Activated CD4-positive, alpha-beta memory T cell treated with anti-CD3 and anti-CD28 coated beads for 36 hours (primary cell): ENCODE measurements at regions of chr3 and their contacts with region 1.

Region 1: GRCh38 chr3:88732186-88732585 is 375.2 kb upstream of the EPHA3 start:
- DNase-seq: no peak
- H3K4me3 Mint-ChIP-seq: no peak overlapping the region
- H3K27ac Mint-ChIP-seq: no peak overlapping the region
- H3K4me1 Mint-ChIP-seq: no peaks in the 10 kb centered on the region
- H3K27me3 Mint-ChIP-seq: no peaks in the 10 kb centered on the region

Region 2: GRCh38 chr3:88707837-88708236 is 24.3 kb before region 1 on chr3:
- CTCF ChIA-PET with region 1: no interaction called
- POLR2A ChIA-PET with region 1: no interaction called
- intact Hi-C with region 1: loop called (anchors 1 kb)
- DNase-seq: no peak
- H3K4me3 Mint-ChIP-seq: no peak overlapping the region
- H3K27ac Mint-ChIP-seq: no peak overlapping the region
- H3K4me1 Mint-ChIP-seq: no peaks in the 10 kb centered on the region
- H3K27me3 Mint-ChIP-seq: no peaks in the 10 kb centered on the region